IMR-90 (cell line): ENCODE measurements at regions of chr2 and their contacts with region 1.

Region 1: GRCh38 chr2:57376985-57377384 is 669.6 kb upstream of the VRK2 start:
- DNase-seq: no peak
- ATAC-seq: no peak
- H3K4me3 ChIP-seq: no peak overlapping the region
- H3K27ac ChIP-seq: no peak overlapping the region
- H3K4me1 ChIP-seq: no peaks in the 10 kb centered on the region
- H3K27me3 ChIP-seq: no peaks in the 10 kb centered on the region
- CTCF ChIP-seq: peak; percentile 10; the same call in 1 of the 2 replicates
- POLR2A ChIP-seq: no peak
- RAD21 ChIP-seq: no peak

Region 2: DNA sequence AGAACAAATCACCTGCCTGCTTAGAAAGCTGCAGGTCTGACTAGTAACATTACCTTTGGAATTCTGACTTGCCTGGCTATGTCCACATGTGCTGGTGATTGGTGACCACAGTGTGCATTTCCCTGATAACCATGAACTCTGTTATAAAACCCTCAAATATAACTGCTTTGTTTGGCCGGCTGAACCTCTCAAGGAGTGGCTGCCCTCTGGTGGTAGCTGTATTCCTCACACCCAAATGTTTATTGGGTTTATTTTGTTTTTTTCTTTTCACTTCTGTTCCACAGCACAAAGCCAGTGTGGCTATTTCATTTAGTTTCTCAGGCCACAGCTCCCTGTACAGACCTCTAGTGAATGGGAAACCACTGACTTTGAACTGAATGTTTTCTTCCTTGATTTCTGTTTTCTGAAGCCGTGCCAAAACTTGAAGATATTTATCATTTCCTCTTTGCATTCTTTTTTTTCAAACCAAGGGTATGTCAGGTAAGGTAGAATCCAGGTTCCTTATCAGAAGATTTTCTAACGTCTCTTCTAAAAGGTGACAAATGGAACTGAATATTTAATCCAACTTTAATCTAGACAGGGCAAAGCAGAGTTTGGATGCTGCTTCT is 120.6 kb after region 1 on chr2:
- CTCF ChIA-PET with region 1: no interaction called
- POLR2A ChIA-PET with region 1: no interaction called
- dilution Hi-C with region 1: no loop called
- in situ Hi-C with region 1: no loop called
- intact Hi-C with region 1: loop called (anchors 1 kb)
- DNase-seq: peak; percentile 32
- ATAC-seq: peak; percentile 81
- H3K4me3 ChIP-seq: no peak overlapping the region
- H3K27ac ChIP-seq: no peak overlapping the region
- H3K4me1 ChIP-seq: no peaks in the 10 kb centered on the region
- H3K27me3 ChIP-seq: no peaks in the 10 kb centered on the region
- CTCF ChIP-seq: peak; percentile 72
- POLR2A ChIP-seq: no peak
- RAD21 ChIP-seq: peak; percentile 66